ENCODE measurements at regions of chr11 and their contacts with region 1.

Region 1: GRCh38 chr11:45872513-45873356 is 12.7 kb upstream of the MAPK8IP1 start:
- DNase-seq: peak; percentile 89

Region 2: DNA sequence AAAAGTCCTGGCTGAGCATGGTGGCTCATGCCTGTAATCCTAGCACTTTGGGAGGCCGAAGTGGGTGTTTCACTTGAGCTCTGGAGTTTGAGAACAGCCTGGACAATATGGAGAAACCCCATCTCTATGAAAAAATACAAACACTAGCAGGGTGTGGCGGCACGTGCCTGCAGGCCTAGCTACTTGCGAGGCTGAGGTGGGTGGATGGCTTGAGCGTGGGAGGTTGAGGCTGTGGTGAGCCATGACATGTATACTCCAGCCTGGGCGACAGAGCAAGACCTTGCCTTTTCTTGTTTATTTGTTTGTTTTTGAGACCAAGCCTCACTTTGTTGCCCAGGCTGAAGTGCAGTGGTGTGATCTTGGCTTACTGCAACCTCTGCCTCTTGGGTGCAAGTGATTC is 33.5 kb before region 1 on chr11:
- CTCF ChIA-PET with region 1: no interaction called
- POLR2A ChIA-PET with region 1: no interaction called
- DNase-seq: no peak

Region 3: DNA sequence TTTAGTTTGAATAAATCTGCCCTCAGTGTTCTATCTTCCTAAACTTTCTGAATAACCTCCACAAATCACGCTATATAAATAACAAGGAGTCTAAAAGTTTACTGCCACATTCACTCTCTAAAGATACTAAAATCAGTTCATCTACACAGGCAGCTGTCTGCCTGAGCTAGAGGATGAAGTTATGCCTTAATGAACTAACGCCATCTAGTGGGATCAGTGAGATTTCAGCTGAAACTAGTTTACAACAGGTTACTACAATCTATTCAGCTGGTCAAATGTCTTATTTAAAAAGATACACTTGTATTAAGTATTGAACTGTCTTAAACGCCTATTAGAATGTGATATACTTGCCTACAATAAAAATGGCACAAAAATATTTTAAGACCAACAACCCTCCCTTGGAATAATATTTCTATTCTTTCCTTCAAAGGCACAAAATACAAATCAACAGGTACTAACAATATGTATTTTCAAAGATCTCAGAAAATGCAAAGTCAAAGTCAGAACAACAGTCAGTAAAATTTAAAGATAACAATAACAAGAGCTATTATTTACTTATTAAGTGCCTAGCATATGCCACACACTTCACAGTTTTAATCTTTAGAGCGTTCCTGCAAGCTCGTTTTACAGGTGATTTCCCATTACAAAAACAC is 133.8 kb after region 1 on chr11:
- CTCF ChIA-PET with region 1: interaction called, 14 read pairs
- POLR2A ChIA-PET with region 1: interaction called, 4 read pairs
- DNase-seq: peak; percentile 67

Measured in HEK293T (cell line).